ENCODE measurements at regions of chr16 and their contacts with region 1.

Region 1: DNA sequence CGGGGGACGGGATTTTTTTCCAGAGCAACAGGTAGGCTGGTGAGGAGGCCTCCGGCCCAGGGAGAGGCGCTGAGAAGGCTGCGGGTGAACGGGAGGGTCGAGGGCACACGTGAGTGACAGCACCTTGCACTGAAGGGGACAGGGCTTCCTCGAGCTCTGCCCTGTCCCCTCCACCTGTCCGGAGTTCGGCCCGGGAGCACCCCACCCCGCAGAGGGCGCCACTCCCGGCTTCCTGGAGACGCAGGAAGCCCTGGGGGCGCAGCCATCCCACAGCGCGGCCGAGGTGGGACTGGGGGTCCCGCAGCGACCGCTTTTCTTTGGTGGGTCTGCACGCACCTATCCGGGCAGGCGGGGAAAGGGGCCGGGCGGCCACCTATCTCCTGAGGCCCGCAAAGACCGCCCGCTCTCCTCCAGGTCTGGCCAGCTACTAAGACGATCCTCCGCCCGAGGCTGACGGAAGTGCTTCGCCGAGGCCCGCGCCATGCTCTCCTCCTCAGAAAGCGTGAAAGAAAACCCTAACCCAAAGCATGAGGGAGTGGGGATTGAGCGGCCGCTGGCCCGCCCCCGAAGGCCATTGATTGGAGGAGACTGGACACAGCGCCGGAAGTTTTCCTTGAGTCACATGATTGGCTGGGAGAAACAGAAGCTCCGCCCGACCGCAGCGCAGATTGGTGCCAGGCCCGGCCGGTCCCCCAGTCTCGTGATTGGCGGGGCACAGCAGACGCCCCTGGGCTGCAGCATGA is 34.3 kb downstream of the DDX19A start:
- DNase-seq: peak; percentile 96
- ATAC-seq: peak; percentile 95
- H3K4me3 ChIP-seq: peak overlapping the region; percentile 63
- H3K27ac ChIP-seq: peak overlapping the region; percentile 79
- H3K4me1 ChIP-seq: no peaks in the 10 kb centered on the region; the same call in 1 of the 2 replicates
- H3K27me3 ChIP-seq: no peaks in the 10 kb centered on the region
- CTCF ChIP-seq: peak; percentile 26; the same call in 1 of the 2 replicates
- POLR2A ChIP-seq: peak; percentile 88
- RAD21 ChIP-seq: no peak

Region 2: DNA sequence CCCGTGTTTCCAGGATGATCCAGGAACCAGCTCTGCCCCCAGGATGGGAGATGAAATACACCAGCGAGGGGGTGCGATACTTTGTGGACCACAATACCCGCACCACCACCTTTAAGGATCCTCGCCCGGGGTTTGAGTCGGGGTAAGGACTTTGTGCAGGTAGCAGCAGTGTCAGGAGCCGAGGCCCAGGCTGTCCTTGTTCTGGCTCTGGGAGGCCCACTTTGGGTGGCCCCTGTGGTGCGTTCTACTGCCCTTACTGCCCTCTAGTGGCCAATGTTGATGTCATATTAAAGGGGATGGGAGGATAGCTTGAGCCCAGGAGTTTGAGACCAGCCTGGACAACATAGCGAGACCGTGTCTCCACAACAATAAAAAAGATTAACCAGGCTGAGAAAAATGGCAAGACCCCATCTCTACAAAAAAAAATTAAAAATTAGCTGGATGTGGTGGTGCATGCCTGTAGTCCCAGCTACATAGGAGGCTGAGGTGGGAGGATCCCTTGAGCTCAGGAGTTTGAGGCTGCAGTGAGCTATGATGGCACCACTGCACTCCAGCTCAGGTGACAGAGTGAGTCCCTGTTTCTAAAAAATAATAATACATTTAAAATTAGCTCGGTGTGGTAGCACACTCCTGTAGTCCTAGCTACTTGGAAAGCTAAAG is 450.8 kb before region 1 on chr16:
- CTCF ChIA-PET with region 1: no interaction called
- POLR2A ChIA-PET with region 1: no interaction called
- dilution Hi-C with region 1: no loop called
- in situ Hi-C with region 1: no loop called
- intact Hi-C with region 1: no loop called
- DNase-seq: peak; percentile 60
- ATAC-seq: peak; percentile 93
- H3K4me3 ChIP-seq: no peak overlapping the region
- H3K27ac ChIP-seq: no peak overlapping the region
- H3K4me1 ChIP-seq: peaks cover 6% of the 10 kb centered on the region
- H3K27me3 ChIP-seq: no peaks in the 10 kb centered on the region
- CTCF ChIP-seq: peak; percentile 74
- POLR2A ChIP-seq: no peak
- RAD21 ChIP-seq: peak; percentile 89

Region 3: DNA sequence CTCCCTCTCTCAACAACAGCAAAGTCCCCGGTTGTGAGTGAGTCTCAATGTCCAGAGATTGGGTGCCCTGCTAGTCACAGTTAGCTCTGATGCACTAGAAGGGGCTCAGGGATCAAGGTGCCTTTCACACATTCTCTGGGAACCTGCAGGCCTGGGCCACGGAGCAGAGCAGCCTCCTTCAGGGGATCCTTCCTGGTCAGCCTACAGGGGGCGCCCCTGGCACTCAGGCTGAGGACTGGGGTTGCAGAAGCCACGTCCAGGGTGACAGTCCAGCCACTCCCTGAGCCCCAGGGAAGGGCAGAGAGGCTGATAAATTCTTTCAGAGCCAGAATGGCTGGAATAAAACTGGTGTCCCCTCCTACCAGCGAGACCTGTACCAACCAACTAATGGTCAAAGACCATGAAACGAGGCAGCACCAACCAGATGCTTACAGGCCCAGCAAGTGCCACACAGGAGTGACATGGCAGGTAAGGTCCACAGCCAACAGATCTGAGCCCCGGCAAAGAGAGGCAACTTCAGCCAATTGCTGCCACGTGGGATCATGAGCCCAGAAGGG is 14.4 kb after region 1 on chr16:
- CTCF ChIA-PET with region 1: interaction called, 5 read pairs
- POLR2A ChIA-PET with region 1: interaction called, 10 read pairs
- dilution Hi-C with region 1: no loop called
- in situ Hi-C with region 1: no loop called
- intact Hi-C with region 1: no loop called
- DNase-seq: peak; percentile 22
- ATAC-seq: peak; percentile 73
- H3K4me3 ChIP-seq: no peak overlapping the region
- H3K27ac ChIP-seq: no peak overlapping the region
- H3K4me1 ChIP-seq: peaks cover 9% of the 10 kb centered on the region
- H3K27me3 ChIP-seq: no peaks in the 10 kb centered on the region
- CTCF ChIP-seq: peak; percentile 57
- POLR2A ChIP-seq: no peak
- RAD21 ChIP-seq: peak; percentile 74

Region 4: DNA sequence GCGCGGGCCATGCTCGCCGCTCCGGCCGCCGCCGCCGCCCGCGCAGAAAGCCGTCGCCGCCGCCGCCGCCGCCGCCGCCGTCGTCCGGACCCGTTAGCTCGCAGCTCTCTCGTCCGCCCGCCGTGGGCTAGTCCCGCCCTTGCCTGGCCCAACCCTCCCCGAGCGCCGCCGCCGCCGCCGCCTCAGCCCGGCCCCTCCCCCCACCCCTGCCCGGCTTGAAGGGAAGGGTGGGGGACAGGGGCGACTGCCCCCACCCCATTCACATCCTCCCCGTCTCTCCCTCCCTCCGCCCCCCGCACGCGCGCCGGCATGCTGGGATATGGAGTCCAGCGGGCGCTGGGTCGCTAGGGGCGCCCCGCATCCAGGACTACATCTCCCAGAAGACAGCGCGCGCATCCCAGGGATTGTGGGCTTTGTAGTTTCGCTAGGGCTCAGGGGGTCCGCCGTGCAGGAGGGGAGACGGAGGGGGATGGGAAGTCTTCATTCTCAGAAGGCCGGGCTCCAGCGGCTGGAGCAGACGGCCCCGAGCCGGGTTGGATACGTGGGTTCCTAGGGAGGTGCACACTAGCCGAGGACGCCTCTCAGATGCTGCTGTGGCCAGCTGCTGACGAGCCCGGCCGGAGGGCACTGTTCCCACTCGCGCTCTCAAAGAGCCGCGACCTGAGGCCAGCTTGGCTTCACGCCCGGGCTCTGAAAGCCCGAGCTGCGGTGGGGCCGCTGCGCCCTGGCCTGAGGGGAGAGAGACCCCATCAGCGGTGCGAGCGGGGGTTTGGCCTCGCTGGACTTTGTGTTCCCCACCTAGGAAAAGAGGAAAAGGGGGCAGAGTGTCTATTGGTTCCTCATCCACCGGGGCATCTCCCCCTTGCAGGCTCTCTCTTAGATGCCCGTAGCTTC is 58.2 kb after region 1 on chr16 and contains the start of gene ST3GAL2:
- CTCF ChIA-PET with region 1: interaction called, 4 read pairs
- POLR2A ChIA-PET with region 1: interaction called, 4 read pairs
- dilution Hi-C with region 1: no loop called
- in situ Hi-C with region 1: no loop called
- intact Hi-C with region 1: loop called (anchors 2 kb)
- DNase-seq: peak; percentile 89
- ATAC-seq: peak; percentile 92
- H3K4me3 ChIP-seq: peak within 1 kb of the TSS; percentile 55
- H3K27ac ChIP-seq: peak within 1 kb of the TSS; percentile 73
- H3K4me1 ChIP-seq: peaks cover 11% of the 10 kb centered on the region
- H3K27me3 ChIP-seq: no peaks in the 10 kb centered on the region
- CTCF ChIP-seq: no peak
- POLR2A ChIP-seq: no peak
- RAD21 ChIP-seq: no peak
- total RNA-seq, gene ST3GAL2: 16.4 and 17.4 TPM in 2 replicates

Region 5: GRCh38 chr16:70454222-70455034 is 73.4 kb after region 1 on chr16 and contains the start of gene FCSK:
- CTCF ChIA-PET with region 1: no interaction called
- POLR2A ChIA-PET with region 1: no interaction called
- dilution Hi-C with region 1: no loop called
- in situ Hi-C with region 1: no loop called
- intact Hi-C with region 1: loop called (anchors 1 kb)
- DNase-seq: peak; percentile 60
- ATAC-seq: peak; percentile 96
- H3K4me3 ChIP-seq: peak within 1 kb of the TSS; percentile 79
- H3K27ac ChIP-seq: peak within 1 kb of the TSS; percentile 100
- H3K4me1 ChIP-seq: peaks cover 5% of the 10 kb centered on the region
- H3K27me3 ChIP-seq: no peaks in the 10 kb centered on the region
- CTCF ChIP-seq: no peak
- POLR2A ChIP-seq: no peak
- RAD21 ChIP-seq: no peak
- total RNA-seq, gene FCSK: 5.3 and 6.1 TPM in 2 replicates

Region 6: GRCh38 chr16:70478912-70479341 is 97.9 kb after region 1 on chr16:
- CTCF ChIA-PET with region 1: no interaction called
- POLR2A ChIA-PET with region 1: no interaction called
- dilution Hi-C with region 1: no loop called
- in situ Hi-C with region 1: no loop called
- intact Hi-C with region 1: loop called (anchors 5 kb)
- DNase-seq: no peak
- ATAC-seq: no peak
- H3K4me3 ChIP-seq: no peak overlapping the region
- H3K27ac ChIP-seq: no peak overlapping the region
- H3K4me1 ChIP-seq: peaks cover 15% of the 10 kb centered on the region
- H3K27me3 ChIP-seq: no peaks in the 10 kb centered on the region
- CTCF ChIP-seq: no peak
- POLR2A ChIP-seq: no peak
- RAD21 ChIP-seq: no peak

Region 7: DNA sequence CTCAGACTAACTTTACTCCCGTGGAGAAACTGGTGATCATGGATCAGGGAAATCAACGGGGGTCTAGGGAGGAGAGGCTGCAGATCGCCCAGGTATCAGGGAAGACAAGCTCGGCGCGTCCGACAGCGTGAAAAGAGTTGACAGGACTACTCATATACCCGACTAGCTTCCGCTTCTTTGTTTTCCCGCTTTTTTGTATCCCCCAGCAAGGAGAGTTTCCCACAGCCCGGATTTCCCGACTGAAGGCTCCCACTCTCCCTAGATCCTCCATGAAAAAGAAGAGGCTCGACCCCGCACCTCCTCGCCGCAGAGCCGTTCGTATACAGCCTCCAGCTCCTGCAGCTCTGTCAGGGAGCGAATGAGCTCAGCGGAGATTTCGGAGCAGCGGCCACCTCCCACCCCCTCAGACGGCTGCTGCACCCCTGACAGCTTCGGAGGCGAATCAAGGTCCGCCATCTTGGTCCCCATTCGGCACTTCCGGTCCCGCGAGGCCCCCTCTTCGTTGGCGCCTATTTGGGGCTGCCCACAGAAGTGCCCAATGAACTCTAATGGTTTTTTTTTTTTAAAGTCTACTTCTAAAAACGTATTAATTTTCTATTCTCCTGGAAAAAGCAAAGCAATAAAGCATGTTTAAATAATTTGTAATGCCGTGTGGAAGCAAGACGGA is 142.2 kb after region 1 on chr16 and contains the start of gene COG4:
- CTCF ChIA-PET with region 1: no interaction called
- POLR2A ChIA-PET with region 1: no interaction called
- dilution Hi-C with region 1: no loop called
- in situ Hi-C with region 1: no loop called
- intact Hi-C with region 1: loop called (anchors 1 kb)
- DNase-seq: peak; percentile 79
- ATAC-seq: peak; percentile 88
- H3K4me3 ChIP-seq: peak within 1 kb of the TSS; percentile 63
- H3K27ac ChIP-seq: peak within 1 kb of the TSS; percentile 79
- H3K4me1 ChIP-seq: peaks cover 3% of the 10 kb centered on the region; the same call in 1 of the 2 replicates
- H3K27me3 ChIP-seq: no peaks in the 10 kb centered on the region
- CTCF ChIP-seq: no peak
- POLR2A ChIP-seq: no peak
- RAD21 ChIP-seq: no peak
- total RNA-seq, gene COG4: 85.0 and 96.1 TPM in 2 replicates

Measured in IMR-90 (cell line).